ENCODE measurements at regions of chr17 and their contacts with region 1.

Region 1: GRCh38 chr17:72539981-72540897 is 419.4 kb downstream of the SOX9 start:
- DNase-seq: no peak
- ATAC-seq: peak; percentile 94
- H3K4me3 ChIP-seq: peak overlapping the region; percentile 21 to 39
- H3K27ac ChIP-seq: peak overlapping the region; percentile 86
- H3K4me1 ChIP-seq: peaks cover 70% of the 10 kb centered on the region
- H3K27me3 ChIP-seq: no peaks in the 10 kb centered on the region
- CTCF ChIP-seq: peak; percentile 99

Region 2: GRCh38 chr17:71472809-71473789 is 1067.1 kb before region 1 on chr17:
- CTCF ChIA-PET with region 1: no interaction called
- POLR2A ChIA-PET with region 1: no interaction called
- in situ Hi-C with region 1: no loop called
- intact Hi-C with region 1: loop called (anchors 10 kb)
- DNase-seq: peak; percentile 32
- ATAC-seq: peak; percentile 93
- H3K4me3 ChIP-seq: no peak overlapping the region
- H3K27ac ChIP-seq: no peak overlapping the region
- H3K4me1 ChIP-seq: no peaks in the 10 kb centered on the region
- H3K27me3 ChIP-seq: no peaks in the 10 kb centered on the region
- CTCF ChIP-seq: peak; percentile 89

Region 3: DNA sequence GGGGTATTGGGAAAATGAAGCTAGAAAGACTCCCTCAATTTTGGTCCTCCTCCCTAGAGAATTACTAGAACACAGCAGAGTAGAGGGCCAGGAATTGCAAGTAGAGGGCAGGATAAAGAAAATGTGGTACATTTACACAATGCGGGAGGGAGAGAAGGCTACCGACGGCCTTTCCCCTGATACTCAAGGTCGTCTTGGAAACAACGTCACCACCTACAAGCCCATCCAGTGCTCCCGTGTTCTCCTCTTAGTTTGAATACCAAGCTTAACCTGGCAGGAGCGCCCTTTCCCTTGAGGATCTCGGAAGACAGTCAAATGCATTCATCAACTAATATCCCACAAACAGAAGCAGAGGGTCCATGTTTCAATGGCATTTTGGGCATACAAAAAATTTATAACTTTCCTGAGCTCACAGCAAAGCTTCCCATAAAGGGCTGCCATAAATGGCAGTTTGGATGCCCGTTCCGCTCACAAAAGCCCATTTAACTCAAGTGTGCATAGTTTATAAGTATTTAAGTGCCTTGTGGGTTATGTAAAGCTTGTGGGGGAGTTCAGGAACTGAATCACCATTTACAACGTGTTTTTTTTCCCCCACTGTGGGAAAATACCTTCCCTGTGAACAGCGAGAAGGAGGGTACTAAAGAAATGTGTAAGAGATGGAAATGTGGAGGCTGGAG is 137.6 kb after region 1 on chr17:
- CTCF ChIA-PET with region 1: no interaction called
- POLR2A ChIA-PET with region 1: no interaction called
- in situ Hi-C with region 1: no loop called
- intact Hi-C with region 1: no loop called
- DNase-seq: no peak
- ATAC-seq: 0 out of 2 replicates have a peak, but pooled peaks have one; percentile 20
- H3K4me3 ChIP-seq: no peak overlapping the region
- H3K27ac ChIP-seq: peak overlapping the region; percentile 70
- H3K4me1 ChIP-seq: peaks cover 24% of the 10 kb centered on the region
- H3K27me3 ChIP-seq: no peaks in the 10 kb centered on the region
- CTCF ChIP-seq: no peak

Measured in Panc1 (cell line).